IMR-90 (cell line): ENCODE measurements at regions of chr7 and their contacts with region 1.

Region 1: GRCh38 chr7:106652909-106653308 is 8.0 kb downstream of the CCDC71L start:
- DNase-seq: no peak
- ATAC-seq: no peak
- H3K4me3 ChIP-seq: no peak overlapping the region
- H3K27ac ChIP-seq: no peak overlapping the region
- H3K4me1 ChIP-seq: no peaks in the 10 kb centered on the region
- H3K27me3 ChIP-seq: no peaks in the 10 kb centered on the region
- CTCF ChIP-seq: no peak
- POLR2A ChIP-seq: no peak
- RAD21 ChIP-seq: no peak

Region 2: DNA sequence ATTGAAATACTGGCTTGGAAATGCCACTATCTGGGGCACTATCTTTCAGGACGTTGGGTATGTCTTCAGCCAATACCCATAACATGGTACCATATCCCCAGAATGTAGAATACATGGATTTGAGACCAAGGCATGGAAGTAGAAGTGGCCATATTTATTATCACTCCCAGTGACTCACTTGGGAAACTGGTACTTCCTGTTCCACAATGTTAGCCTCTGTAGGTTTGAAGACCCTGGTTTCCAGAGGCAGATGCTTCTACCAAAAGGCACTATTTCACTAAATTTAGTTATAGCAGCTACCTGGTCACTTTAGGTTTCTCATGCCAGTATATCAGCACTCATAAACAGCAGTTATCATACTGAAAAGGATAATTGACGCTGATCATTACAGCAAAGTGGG is 176.2 kb before region 1 on chr7:
- CTCF ChIA-PET with region 1: no interaction called
- POLR2A ChIA-PET with region 1: no interaction called
- dilution Hi-C with region 1: no loop called
- in situ Hi-C with region 1: no loop called
- intact Hi-C with region 1: no loop called
- DNase-seq: no peak
- ATAC-seq: no peak
- H3K4me3 ChIP-seq: no peak overlapping the region
- H3K27ac ChIP-seq: no peak overlapping the region
- H3K4me1 ChIP-seq: 0 out of 2 replicates have a peak, but pooled peaks cover 2% of the 10 kb centered on the region
- H3K27me3 ChIP-seq: no peaks in the 10 kb centered on the region
- CTCF ChIP-seq: no peak
- POLR2A ChIP-seq: no peak
- RAD21 ChIP-seq: no peak

Region 3: GRCh38 chr7:106618480-106618879 is 34.4 kb before region 1 on chr7:
- CTCF ChIA-PET with region 1: no interaction called
- POLR2A ChIA-PET with region 1: no interaction called
- dilution Hi-C with region 1: no loop called
- in situ Hi-C with region 1: no loop called
- intact Hi-C with region 1: loop called (anchors 5 kb)
- DNase-seq: peak; percentile 57
- ATAC-seq: no peak
- H3K4me3 ChIP-seq: no peak overlapping the region
- H3K27ac ChIP-seq: no peak overlapping the region
- H3K4me1 ChIP-seq: peaks cover 14% of the 10 kb centered on the region
- H3K27me3 ChIP-seq: no peaks in the 10 kb centered on the region
- CTCF ChIP-seq: no peak
- POLR2A ChIP-seq: no peak
- RAD21 ChIP-seq: no peak

Region 4: DNA sequence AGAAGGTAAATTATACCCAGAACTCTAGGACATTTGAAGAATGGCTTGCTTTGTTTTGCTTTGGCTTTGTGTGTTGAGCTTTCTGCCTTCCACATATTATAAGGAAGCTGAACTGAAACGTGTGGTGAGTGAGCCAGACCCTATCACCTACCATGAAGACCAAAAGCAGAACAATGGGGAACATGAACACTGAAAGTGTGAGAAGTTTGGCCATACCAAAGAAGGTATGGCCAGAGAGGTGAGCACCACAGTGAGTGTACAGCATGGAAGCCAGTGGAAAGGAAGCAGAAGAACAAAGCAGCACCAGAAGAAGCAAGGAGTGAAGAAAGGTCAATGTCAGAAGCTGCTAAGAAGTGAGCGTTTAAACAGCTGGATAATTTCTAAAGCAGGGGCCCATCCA is 67.7 kb after region 1 on chr7:
- CTCF ChIA-PET with region 1: no interaction called
- POLR2A ChIA-PET with region 1: no interaction called
- dilution Hi-C with region 1: no loop called
- in situ Hi-C with region 1: no loop called
- intact Hi-C with region 1: no loop called
- DNase-seq: no peak
- ATAC-seq: no peak
- H3K4me3 ChIP-seq: no peak overlapping the region
- H3K27ac ChIP-seq: no peak overlapping the region
- H3K4me1 ChIP-seq: peaks cover 12% of the 10 kb centered on the region
- H3K27me3 ChIP-seq: no peaks in the 10 kb centered on the region
- CTCF ChIP-seq: no peak
- POLR2A ChIP-seq: no peak
- RAD21 ChIP-seq: no peak

Region 5: DNA sequence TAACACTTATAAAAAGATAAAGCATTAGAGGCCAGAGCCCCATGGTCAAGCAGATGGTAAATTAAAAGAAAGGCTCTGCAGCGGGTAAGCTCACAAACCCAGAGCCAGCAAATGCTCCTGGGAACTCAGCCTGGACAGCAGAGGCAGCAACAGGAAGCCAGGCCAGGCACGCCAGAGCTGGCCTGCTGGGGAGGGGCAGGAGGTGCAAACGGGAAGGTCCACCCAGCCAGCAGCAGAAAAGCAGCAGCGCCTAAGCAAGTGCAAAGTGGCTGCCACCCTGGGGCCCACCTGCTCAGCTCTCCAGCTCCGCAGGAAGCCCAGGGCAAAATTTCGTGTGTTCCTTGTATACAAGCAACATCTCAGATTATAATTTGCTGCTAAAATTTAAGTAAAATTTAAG is 734.2 kb after region 1 on chr7:
- CTCF ChIA-PET with region 1: no interaction called
- POLR2A ChIA-PET with region 1: no interaction called
- dilution Hi-C with region 1: no loop called
- in situ Hi-C with region 1: no loop called
- intact Hi-C with region 1: no loop called
- DNase-seq: peak; percentile 39
- ATAC-seq: peak; percentile 60
- H3K4me3 ChIP-seq: no peak overlapping the region
- H3K27ac ChIP-seq: no peak overlapping the region
- H3K4me1 ChIP-seq: peaks cover 13% of the 10 kb centered on the region
- H3K27me3 ChIP-seq: no peaks in the 10 kb centered on the region
- CTCF ChIP-seq: no peak
- POLR2A ChIP-seq: no peak
- RAD21 ChIP-seq: no peak